Esophagus muscularis mucosa (tissue), 4 donors: ENCODE measurements at regions of chr6 and their contacts with region 1.

Region 1: GRCh38 chr6:33199680-33200218 is 716 bp downstream of the RXRB start:
- DNase-seq: no peak
- H3K4me3 ChIP-seq: peak overlapping the region; percentile 76 to 84 (median 80)
- H3K27ac ChIP-seq: peak overlapping the region; percentile 90 to 97 (median 93)
- H3K4me1 ChIP-seq: peaks cover 52 to 73% (median 65%) of the 10 kb centered on the region in 4 donors
- H3K27me3 ChIP-seq: no peaks in the 10 kb centered on the region
- CTCF ChIP-seq: no peak
- EP300 ChIP-seq: no peak
- POLR2A ChIP-seq: no peak

Region 2: DNA sequence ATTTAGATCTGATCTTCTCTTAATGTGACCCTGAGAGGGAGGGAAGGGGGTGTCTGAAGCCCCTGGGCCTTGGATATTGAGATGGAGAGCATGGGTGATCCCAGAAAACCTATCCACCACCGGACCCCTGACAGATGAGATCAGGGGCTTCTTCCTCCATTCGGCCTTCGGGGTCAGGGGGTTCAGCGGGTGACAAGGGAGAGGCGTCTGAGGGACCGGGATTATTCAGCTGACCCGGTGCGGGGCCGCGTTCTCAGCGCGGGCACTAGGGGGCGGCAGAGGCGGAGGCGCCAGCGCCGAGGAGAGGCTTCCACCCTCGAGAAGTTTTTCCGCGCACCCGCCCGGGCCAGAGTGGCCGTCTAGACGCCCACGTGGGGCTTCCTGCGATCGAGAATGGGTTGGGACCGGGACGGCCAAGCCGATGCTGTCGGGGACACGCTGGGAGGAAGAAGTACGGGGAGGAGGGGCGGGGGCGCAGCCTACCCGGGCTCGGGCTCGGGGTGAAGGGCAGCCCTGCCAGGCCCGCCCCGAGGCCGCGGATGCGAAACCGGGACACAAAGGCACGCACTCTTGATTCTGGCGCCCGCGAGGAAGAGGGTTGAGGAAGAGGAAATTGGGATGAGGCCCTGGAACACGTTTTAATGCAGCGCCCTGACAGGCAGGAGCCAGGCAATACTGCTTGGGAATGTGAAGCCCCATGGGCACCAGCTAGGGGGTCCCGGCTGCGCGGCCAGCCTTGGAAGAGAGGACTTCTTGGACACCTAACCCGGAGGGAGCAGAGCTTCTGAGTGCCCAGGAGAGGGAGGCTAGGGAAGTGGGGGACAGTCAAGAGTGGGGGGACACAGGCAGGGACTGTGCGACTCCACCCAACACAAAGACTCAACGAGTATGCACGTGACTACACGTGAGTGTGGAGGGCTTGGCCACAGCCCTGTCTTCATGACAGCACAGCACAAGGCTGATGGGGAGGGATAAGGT is 38.1 kb before region 1 on chr6:
- intact Hi-C with region 1: loop called (anchors 5 kb)
- DNase-seq: no peak
- H3K4me3 ChIP-seq: peak overlapping the region; percentile 49 to 61 (median 55)
- H3K27ac ChIP-seq: peak overlapping the region; percentile 54 to 78 (median 68)
- H3K4me1 ChIP-seq: peaks cover 14 to 22% (median 20%) of the 10 kb centered on the region in 4 donors
- H3K27me3 ChIP-seq: peaks cover 0 to 7% (median 0%) of the 10 kb centered on the region in 4 donors
- CTCF ChIP-seq: peak; percentile 93 to 99 (median 94)
- EP300 ChIP-seq: no peak
- POLR2A ChIP-seq: no peak